GM10248 (cell line): ENCODE measurements at regions of chr4 and their contacts with region 1.

Region 1: GRCh38 chr4:124468360-124468759 is 244.2 kb downstream of the ANKRD50 start:
- DNase-seq: no peak
- CTCF ChIP-seq: no peak

Region 2: GRCh38 chr4:124478470-124478869 is 10.1 kb after region 1 on chr4:
- CTCF ChIA-PET with region 1: interaction called, 13 read pairs
- POLR2A ChIA-PET with region 1: no interaction called
- DNase-seq: no peak
- CTCF ChIP-seq: no peak